PC-9 (cell line): ENCODE measurements at regions of chr10 and their contacts with region 1.

Region 1: DNA sequence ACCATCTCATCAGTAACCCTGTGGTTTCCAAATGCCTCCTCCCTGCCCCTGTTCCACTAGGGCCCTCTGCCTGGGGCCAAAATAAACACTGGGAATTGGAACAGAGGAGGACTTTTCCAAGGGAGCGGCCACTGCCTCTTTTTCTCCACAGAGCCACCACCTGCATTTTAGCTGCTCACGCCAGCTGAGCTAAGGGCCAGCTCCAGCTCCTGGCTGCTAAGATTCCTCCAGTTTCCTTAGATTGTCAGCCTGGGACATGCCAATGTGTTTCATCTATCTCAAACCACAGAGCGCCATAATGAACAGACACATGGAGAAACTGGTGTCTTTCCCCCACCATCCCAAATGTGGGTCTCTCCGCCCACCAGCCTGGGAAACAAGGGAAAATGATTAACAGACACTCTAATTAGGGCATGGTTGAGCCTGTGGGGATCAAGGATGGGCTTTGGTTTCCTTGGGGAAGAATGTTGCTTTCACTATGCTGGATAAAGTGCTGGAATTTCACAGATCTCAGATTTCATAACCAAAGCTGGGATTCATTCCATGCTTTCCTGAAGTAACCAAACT is 52.2 kb downstream of the ASB13 start:
- DNase-seq: no peak
- H3K4me3 ChIP-seq: no peak overlapping the region
- H3K27ac ChIP-seq: no peak overlapping the region
- H3K4me1 ChIP-seq: peaks cover 49% of the 10 kb centered on the region
- H3K27me3 ChIP-seq: no peaks in the 10 kb centered on the region
- CTCF ChIP-seq: no peak

Region 2: DNA sequence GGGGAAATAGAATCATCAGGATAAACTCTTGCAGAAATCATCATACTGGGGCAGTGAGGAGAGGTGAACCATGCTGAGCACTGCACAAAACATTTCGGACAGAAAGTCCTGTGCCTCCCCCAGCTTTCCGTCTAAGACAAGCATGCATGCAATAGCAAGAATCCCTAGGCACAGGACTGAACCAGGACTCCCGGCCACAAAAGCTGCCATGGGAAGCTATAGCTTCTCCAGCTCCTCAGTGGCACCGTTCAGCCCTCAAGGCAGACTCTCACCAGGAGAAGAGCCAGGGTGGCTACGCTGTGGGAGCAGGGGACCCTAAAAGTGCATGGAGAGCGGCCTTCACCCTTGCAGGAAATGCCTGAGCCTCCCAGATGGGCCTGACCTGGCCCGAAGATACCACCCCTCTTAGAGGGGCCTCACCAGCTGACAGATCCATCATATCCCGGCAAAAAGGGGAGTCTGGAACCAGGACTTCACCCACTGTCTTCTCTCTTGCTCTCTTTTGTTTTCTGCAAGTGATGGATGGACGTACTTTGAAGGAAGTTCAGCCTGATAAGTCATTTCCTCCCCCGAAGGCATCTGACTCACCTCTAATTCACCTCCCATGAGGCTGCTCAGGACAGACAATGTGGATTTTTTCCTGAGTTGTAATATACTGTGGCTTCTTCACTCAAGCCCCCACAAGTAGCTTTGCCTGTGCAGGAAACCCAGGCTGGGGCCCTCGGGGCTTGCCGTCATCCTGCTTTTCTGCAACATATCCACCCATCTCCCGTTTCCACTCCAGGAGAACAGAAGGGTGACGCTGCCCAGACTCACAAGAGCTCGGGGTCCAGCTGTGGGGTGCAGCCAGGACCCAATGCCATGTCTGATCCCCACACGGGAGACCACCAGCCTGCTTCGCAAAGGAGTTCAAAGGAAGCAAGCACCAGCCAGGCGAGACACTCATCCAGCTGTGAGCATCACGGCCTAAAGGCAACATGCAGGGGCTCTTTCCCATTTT is 18.3 kb before region 1 on chr10:
- CTCF ChIA-PET with region 1: no interaction called
- POLR2A ChIA-PET with region 1: interaction called, 9 read pairs
- intact Hi-C with region 1: loop called (anchors 1 kb)
- DNase-seq: peak; percentile 69 to 93
- H3K4me3 ChIP-seq: peak overlapping the region; percentile 64
- H3K27ac ChIP-seq: peak overlapping the region; percentile 87
- H3K4me1 ChIP-seq: peaks cover 67% of the 10 kb centered on the region
- H3K27me3 ChIP-seq: no peaks in the 10 kb centered on the region
- CTCF ChIP-seq: no peak

Region 3: DNA sequence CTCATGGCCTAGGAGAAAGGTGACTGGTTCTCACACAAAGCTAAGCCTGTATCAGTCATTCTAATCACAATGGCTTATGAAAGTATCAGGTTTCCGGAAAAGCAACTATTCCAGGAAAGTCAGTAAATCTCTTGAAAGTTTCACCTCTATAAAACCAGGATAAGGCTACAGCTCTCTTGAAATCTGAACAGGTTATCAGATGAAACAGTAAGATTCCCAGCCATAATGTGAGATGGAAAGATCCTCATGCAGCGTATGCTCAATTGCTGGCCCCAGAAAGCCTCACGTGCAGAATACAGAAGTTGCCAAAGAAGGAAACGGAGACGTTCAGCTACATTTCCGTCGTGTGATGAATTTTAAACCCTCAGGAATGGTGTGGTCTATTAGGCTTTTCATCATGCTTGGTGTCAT is 678.5 kb after region 1 on chr10:
- CTCF ChIA-PET with region 1: no interaction called
- POLR2A ChIA-PET with region 1: interaction called, 10 read pairs
- intact Hi-C with region 1: no loop called
- DNase-seq: peak in 1 of 2 experiments; percentile 62
- H3K4me3 ChIP-seq: no peak overlapping the region
- H3K27ac ChIP-seq: peak overlapping the region; percentile 17; the same call in 1 of the 2 replicates
- H3K4me1 ChIP-seq: peaks cover 44% of the 10 kb centered on the region
- H3K27me3 ChIP-seq: no peaks in the 10 kb centered on the region
- CTCF ChIP-seq: no peak